Activated CD4-positive, alpha-beta memory T cell treated with anti-CD3 and anti-CD28 coated beads for 36 hours (primary cell): ENCODE measurements at regions of chr11 and their contacts with region 1.

Region 1: GRCh38 chr11:127925475-127925874 is 661.9 kb downstream of the ETS1 start:
- DNase-seq: no peak
- H3K4me3 Mint-ChIP-seq: no peak overlapping the region
- H3K27ac Mint-ChIP-seq: no peak overlapping the region
- H3K4me1 Mint-ChIP-seq: no peaks in the 10 kb centered on the region
- H3K27me3 Mint-ChIP-seq: peaks cover 9% of the 10 kb centered on the region

Region 2: GRCh38 chr11:127890030-127890611 is 35.4 kb before region 1 on chr11:
- CTCF ChIA-PET with region 1: no interaction called
- POLR2A ChIA-PET with region 1: no interaction called
- intact Hi-C with region 1: no loop called
- DNase-seq: no peak
- H3K4me3 Mint-ChIP-seq: no peak overlapping the region
- H3K27ac Mint-ChIP-seq: no peak overlapping the region
- H3K4me1 Mint-ChIP-seq: no peaks in the 10 kb centered on the region
- H3K27me3 Mint-ChIP-seq: peaks cover 6% of the 10 kb centered on the region

Region 3: GRCh38 chr11:127972816-127973215 is 47.3 kb after region 1 on chr11:
- CTCF ChIA-PET with region 1: no interaction called
- POLR2A ChIA-PET with region 1: no interaction called
- intact Hi-C with region 1: no loop called
- DNase-seq: no peak
- H3K4me3 Mint-ChIP-seq: no peak overlapping the region
- H3K27ac Mint-ChIP-seq: no peak overlapping the region
- H3K4me1 Mint-ChIP-seq: no peaks in the 10 kb centered on the region
- H3K27me3 Mint-ChIP-seq: peaks cover 14% of the 10 kb centered on the region

Region 4: DNA sequence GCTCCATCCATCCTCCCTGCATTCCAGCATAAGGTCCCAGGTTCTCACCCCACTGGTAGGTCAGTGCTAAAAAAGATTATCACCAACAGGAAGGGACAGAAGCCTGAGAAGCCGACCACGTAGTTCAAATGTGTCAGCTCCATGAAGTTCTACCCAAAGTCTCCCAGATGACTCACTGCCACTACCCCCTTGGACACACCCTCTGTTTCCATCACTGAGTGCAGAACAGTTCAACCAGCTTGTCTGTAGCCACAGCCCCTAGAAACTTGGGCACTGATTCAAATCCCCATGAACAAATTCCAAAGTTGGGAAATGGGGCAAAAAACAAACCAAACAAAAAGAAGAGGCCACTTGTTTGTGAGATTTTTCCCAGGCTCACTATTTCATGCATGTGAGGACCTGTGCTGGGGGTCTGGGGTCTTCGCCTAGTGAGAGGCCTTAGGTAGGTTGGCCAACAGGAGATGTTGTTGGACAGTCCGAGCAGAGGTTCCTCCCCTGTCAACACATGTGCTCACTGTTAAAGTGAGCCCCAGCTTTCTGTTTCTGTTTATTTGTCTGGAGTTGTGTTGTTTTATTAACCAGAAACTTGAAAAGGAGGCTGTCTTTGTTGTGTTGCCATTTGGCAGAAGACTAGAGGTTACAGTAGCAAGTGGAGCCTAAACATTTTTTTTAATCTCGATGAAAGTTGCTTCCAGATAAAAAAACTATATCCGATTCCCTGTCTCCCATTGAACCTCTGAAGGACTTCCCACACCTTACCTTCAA is 744.2 kb after region 1 on chr11:
- CTCF ChIA-PET with region 1: no interaction called
- POLR2A ChIA-PET with region 1: no interaction called
- intact Hi-C with region 1: loop called (anchors 10 kb)
- DNase-seq: no peak
- H3K4me3 Mint-ChIP-seq: no peak overlapping the region
- H3K27ac Mint-ChIP-seq: no peak overlapping the region
- H3K4me1 Mint-ChIP-seq: peaks cover 4% of the 10 kb centered on the region
- H3K27me3 Mint-ChIP-seq: no peaks in the 10 kb centered on the region